ENCODE measurements at regions of chrX and their contacts with region 1.

Region 1: GRCh38 chrX:132071260-132071659 is 48.2 kb downstream of the STK26 start:
- H3K4me3 Mint-ChIP-seq: no peak overlapping the region
- H3K27ac Mint-ChIP-seq: no peak overlapping the region
- H3K4me1 Mint-ChIP-seq: no peaks in the 10 kb centered on the region
- H3K27me3 Mint-ChIP-seq: no peaks in the 10 kb centered on the region

Region 2: DNA sequence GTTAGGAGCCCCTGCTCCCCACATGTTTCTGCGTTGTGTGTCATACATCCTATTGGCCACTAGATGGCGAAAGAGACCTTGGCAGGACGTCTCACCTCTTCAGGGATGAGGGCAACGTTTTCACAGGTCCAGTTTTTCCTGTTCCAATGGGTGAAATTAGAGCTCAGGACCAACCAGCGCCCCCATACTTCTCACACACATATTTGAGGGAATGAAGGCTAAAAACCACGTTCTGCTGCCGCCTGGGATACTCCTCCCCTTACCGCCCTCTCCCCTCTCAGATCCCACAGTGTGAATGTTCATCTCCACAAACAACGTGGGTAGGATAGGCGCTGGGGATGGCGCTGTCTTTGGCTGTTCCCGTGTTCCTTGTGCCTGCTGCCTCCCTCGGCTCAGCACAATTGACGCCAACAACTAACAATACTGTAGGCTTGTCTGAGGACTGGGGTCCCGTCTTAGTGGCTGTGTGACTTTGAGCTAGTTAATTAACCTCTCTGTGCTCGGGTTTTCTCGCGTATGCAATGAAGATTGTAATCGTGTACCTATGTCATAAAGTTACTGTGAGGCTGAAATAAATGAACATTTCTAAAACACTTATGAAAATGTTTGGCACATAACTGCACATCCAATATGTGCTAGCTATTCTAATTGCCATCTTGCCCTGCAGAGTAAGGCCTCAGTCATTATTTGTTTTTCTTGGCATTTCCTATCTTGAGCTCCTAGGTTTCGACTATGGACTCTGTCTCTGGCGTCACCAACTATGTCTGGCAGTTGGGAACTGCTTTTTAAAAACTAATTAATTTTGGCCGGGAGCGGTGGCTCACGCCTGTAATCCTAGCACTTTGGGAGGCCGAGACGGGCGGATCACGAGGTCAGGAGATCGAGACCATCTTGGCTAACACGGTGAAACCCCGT is 229.5 kb before region 1 on chrX:
- intact Hi-C with region 1: loop called (anchors 5 kb)
- H3K4me3 Mint-ChIP-seq: no peak overlapping the region
- H3K27ac Mint-ChIP-seq: no peak overlapping the region
- H3K4me1 Mint-ChIP-seq: no peaks in the 10 kb centered on the region
- H3K27me3 Mint-ChIP-seq: no peaks in the 10 kb centered on the region

Region 3: GRCh38 chrX:132017431-132018185 is 53.7 kb before region 1 on chrX:
- intact Hi-C with region 1: no loop called
- H3K4me3 Mint-ChIP-seq: no peak overlapping the region
- H3K27ac Mint-ChIP-seq: no peak overlapping the region
- H3K4me1 Mint-ChIP-seq: peaks cover 18% of the 10 kb centered on the region
- H3K27me3 Mint-ChIP-seq: no peaks in the 10 kb centered on the region

Measured in dendritic cell treated with granulocyte-macrophage colony-stimulating factor and Interleukin-4, amounts not matched to agents 40 ng/mL and 50 ng/mL, for 4 days (primary cell).